Prostate gland (tissue), 2 donors: ENCODE measurements at regions of chr1 and their contacts with region 1.

Region 1: DNA sequence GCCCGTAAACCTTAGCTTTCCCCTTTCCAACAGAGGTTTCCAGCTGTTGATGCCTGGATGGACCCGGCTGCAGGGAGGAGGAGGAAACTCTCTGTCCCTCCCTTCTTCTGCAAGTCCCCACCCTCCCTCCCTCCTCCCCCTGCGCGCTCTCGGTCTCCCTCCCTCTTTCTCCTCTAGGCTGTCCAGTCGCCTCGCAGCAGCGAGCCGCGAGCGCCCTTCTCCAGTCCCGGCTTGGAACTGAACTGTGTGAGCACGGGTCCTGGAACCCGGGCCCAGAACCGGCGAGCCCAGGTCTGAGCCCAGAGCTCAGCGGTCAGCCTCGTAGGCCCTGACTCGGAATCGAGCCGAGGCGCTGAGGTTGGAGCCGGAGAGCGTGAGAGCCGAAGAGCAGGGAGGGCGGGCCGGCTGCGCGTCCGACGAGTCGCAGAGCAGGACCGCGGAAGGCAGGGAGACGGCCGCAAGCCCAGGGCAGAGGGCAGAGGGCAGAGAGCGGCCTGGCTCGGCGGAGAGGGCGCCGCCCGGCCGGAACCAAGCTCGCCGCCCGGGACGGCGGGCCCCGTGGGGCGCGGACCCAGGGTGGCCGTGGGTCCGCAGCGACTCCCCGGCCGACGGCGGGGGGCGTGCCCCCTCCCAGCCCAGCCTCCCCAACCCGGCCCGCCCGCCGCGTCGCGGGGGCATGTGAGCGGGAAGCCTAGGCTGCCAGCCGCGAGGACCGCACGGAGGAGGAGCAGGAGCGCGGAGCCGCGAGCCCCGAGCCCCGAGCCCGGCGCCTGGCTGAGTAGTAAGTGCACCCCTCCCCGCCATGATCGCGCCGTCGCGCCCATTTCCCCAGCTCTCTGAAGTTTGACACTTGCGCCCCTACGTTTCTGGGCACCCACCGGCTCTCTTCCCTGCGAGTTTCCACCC is at the start of gene SOX13:
- DNase-seq: peak; percentile 94
- H3K4me3 ChIP-seq: peak within 1 kb of the TSS; percentile 86 to 96
- H3K27ac ChIP-seq: peak within 1 kb of the TSS; percentile 98
- H3K4me1 ChIP-seq: peaks cover 21% of the 10 kb centered on the region
- H3K27me3 ChIP-seq: no peaks in the 10 kb centered on the region
- CTCF ChIP-seq: peak in 3 of 4 experiments; percentile 15 to 47 (median 26)
- POLR2A ChIP-seq: peak; percentile 95
- total RNA-seq, gene SOX13: 91.9 to 95.9 TPM

Region 2: DNA sequence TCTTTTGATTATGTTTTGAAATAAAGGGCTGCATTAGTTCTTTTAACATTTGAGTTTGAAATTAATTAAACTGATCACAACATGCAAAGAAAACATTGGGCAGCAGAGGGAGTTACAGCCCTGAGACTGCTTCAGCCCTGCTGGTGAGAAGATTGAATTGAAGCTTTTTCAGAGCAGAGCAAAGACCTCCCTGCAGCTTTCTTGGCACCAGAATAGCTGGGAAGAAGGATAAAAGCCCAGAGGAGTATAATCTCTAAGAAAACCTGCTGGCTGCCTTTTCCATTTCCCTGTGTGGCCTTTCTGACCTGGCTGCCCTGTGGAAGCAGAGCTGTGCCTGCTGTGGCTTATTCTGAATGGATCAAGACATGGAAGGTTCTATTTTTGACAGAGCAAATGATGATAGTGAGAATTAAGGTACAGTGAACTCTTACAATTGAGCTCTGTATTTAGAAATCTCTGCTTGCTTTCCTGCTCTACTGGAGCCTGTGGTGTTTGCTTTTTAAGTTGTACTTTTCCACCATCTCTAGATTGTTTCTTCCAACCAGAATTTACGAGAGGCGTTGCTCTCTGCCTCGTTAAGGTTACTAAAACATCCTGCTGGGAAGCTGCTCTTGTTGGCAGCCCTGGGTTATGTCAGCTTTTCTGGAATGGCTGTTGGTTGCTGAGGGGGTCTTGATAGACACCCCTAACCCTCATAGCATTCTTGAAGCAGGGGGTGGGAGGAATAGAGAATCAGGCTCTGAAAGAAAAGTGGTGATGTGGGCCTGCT is 201.9 kb before region 1 on chr1:
- intact Hi-C with region 1: loop called (anchors 5 kb)
- DNase-seq: peak; percentile 60
- H3K4me3 ChIP-seq: no peak overlapping the region
- H3K27ac ChIP-seq: peak overlapping the region; percentile 82
- H3K4me1 ChIP-seq: peaks cover 2% of the 10 kb centered on the region
- H3K27me3 ChIP-seq: no peaks in the 10 kb centered on the region
- CTCF ChIP-seq: peak; percentile 80 to 99 (median 90)
- POLR2A ChIP-seq: no peak

Region 3: GRCh38 chr1:204018463-204018862 is 54.7 kb before region 1 on chr1:
- intact Hi-C with region 1: no loop called
- DNase-seq: no peak
- H3K4me3 ChIP-seq: no peak overlapping the region
- H3K27ac ChIP-seq: no peak overlapping the region
- H3K4me1 ChIP-seq: no peaks in the 10 kb centered on the region
- H3K27me3 ChIP-seq: no peaks in the 10 kb centered on the region
- CTCF ChIP-seq: no peak
- POLR2A ChIP-seq: no peak

Region 4: DNA sequence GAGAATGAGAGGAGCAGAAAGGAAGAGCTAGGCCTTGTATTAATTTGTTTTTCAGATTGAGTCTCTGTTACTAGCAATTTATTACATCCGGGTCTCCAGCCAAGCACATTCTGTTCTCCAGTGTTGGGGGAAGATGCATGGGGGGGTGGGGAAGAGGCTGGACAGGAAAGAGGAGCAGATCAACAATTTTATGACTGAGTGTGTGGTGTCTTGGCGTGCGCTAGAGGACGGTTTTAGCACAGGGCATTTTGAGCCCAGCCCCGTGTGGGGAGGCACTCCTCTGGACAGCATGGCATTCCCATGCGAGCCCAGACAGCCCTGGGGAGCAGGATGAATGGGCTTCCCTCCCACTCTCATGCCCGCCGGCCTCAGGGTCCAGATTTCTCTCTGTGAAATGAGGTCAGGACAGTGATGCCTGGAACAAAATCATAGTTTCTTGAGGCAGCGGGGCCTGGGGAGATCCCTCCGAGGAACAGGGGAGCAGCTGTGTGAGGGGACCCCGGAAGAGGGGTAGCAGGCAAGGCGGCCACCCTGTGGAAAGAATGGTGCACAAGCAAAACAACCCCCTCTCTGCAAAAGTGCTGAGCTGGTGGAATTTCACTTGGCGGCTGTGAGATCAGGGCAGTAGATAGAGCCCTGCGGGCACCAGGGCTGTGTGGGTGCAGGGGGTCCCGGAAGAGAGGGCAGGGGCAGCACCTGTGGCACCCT is 16.0 kb after region 1 on chr1:
- intact Hi-C with region 1: loop called (anchors 2 kb)
- DNase-seq: peak; percentile 96
- H3K4me3 ChIP-seq: peak overlapping the region in 1 of 2 donors; percentile 26
- H3K27ac ChIP-seq: peak overlapping the region; percentile 98
- H3K4me1 ChIP-seq: peaks cover 67% of the 10 kb centered on the region
- H3K27me3 ChIP-seq: no peaks in the 10 kb centered on the region
- CTCF ChIP-seq: peak in 2 of 4 experiments; percentile 9 to 46
- POLR2A ChIP-seq: no peak

Region 5: DNA sequence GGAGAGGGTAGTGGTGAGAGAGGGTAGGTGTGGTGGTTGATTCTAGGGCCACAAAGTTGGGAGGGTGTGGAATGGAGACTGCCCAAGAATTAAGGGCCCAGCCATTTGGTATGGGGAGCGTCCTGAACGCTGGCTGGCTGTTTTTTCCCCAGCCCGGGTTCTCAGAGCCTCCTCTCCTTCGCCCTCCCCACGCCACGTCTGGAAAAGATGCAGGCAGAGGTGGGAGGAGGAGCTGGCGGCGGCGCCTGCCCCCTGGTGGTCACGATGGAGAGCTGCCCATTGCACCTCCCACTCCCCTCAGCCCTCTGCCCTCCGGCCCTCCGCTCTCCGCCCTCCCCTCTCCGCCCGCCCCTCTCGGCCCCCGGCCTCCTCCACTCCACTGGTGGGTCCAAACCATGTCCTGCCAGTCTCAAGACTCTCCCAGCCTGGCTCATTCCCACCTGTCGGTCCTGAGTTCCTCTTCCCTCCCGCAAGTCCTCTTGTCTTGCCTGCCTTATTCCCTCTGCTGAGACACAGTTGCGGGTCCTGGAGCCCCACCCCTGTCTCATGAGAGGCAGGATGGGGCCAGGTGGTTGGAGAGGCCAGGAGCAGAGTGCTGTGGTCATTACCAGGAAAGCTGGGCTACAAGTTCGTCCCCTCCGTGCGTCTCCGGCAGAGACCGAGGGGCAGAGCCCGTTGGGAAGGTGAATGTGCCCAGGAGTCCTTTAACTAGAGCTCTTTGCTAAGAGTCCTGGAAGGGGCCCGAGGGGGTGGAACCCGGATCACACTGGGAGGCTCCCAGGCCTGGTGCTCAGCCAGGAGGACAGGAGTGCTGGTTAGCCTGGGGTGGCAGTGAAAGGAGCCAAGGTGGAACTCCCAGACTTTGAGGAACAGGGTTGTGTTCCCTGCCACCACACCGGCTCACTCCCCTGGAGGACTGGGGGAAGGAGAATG is 56.0 kb after region 1 on chr1:
- intact Hi-C with region 1: loop called (anchors 2 kb)
- DNase-seq: peak; percentile 93
- H3K4me3 ChIP-seq: peak overlapping the region; percentile 21 to 33
- H3K27ac ChIP-seq: peak overlapping the region; percentile 86 to 93
- H3K4me1 ChIP-seq: peaks cover 38% of the 10 kb centered on the region
- H3K27me3 ChIP-seq: no peaks in the 10 kb centered on the region
- CTCF ChIP-seq: peak; percentile 91 to 98 (median 94)
- POLR2A ChIP-seq: peak; percentile 32